ENCODE measurements at regions of chr4 and their contacts with region 1.

Region 1: DNA sequence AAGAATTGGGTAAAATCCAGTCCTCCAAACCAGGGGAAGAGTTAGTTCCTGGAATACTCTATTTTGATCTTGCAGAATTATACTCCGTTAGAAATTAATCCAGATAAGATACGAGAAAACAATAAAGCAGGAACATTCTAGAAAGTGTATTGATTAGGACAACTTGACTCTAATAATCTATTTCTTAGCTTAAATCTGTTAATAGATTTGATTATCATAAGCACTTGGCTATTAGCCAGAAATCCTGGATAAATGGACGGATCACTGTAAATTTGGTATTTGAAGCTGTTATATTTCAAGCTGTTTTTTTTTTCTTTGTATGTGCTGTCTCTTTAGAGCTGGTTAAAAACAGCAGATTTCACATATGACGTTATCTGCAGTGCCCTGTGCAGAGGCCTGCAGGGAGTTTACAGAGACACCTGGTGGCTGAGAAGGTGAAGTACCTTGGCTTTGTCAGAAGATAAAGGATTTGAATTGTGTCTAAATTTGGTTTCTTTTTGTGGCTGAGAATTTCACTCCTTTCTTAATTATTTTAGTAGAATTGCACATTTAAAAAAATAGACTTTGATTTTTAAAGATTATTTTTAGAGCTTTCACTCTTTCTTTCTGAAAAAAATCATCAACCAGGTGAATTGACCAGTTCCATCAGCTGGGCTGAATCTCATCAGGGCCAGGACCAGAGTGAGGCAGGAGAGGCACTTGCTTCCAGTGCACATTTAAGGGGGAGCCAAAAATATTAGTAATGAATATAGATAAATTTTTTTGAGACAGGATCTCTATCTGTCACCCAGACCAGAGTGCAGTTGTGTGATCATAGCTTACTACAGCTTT is 9.7 kb upstream of the CHRNA9 start:
- DNase-seq: no peak
- H3K4me3 ChIP-seq: no peak overlapping the region
- H3K27ac ChIP-seq: no peak overlapping the region
- H3K4me1 ChIP-seq: peaks cover 0 to 5% (median 0%) of the 10 kb centered on the region in 4 experiments; a peak in 1 of 7 replicates
- H3K27me3 ChIP-seq: no peaks in the 10 kb centered on the region
- CTCF ChIP-seq: peak; percentile 54 to 81 (median 70)
- EP300 ChIP-seq: no peak
- POLR2A ChIP-seq: no peak
- RAD21 ChIP-seq: peak; percentile 82 to 84

Region 2: DNA sequence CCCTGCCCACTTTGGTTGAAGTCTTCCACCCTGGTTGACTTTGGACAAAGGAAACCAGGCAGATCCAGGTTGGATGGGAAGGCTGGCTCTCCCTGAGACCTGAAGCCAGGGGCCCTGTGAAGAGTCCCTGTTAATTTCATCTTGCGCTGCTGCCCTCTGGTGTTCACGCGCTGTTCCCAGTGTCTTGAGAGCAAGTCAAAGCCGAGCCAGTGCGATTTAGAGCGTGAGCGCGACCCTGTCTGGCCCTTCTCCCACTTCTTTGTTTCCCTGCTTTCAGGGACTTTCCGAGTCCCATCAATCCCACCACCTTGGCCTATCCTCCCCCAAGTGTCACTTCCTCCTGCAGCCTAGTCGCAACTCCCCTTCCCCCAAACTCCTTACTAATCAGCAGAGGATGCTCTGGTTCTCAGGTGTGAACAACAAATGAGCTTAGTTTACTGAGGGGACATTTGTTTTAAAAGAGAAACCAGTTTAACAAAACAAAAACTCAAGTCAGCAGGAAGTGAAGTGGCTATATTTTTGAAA is 16.1 kb before region 1 on chr4:
- CTCF ChIA-PET with region 1: interaction called, 39 read pairs
- POLR2A ChIA-PET with region 1: interaction called, 8 read pairs
- DNase-seq: peak; percentile 92 to 95
- H3K4me3 ChIP-seq: peak overlapping the region in 1 of 4 experiments; percentile 16; a peak in 1 of 8 replicates
- H3K27ac ChIP-seq: peak overlapping the region; percentile 2; the same call in 1 of the 2 replicates
- H3K4me1 ChIP-seq: peaks cover 6 to 25% (median 16%) of the 10 kb centered on the region in 4 experiments; a peak in 6 of 7 replicates
- H3K27me3 ChIP-seq: peaks cover 0 to 1% (median 0%) of the 10 kb centered on the region in 4 experiments; a peak in 1 of 7 replicates
- CTCF ChIP-seq: peak; percentile 85 to 96 (median 87)
- EP300 ChIP-seq: peak in 1 of 2 experiments; percentile 81; a peak in 1 of 3 replicates
- POLR2A ChIP-seq: peak in 1 of 2 experiments; percentile 39; a peak in 1 of 3 replicates
- RAD21 ChIP-seq: peak; percentile 86 to 88

Region 3: GRCh38 chr4:40340030-40340429 is 14.6 kb after region 1 on chr4:
- CTCF ChIA-PET with region 1: interaction called, 14 read pairs
- POLR2A ChIA-PET with region 1: interaction called, 4 read pairs
- DNase-seq: no peak
- H3K4me3 ChIP-seq: no peak overlapping the region
- H3K27ac ChIP-seq: no peak overlapping the region
- H3K4me1 ChIP-seq: peaks cover 0 to 5% (median 1%) of the 10 kb centered on the region in 4 experiments; a peak in 3 of 7 replicates
- H3K27me3 ChIP-seq: no peaks in the 10 kb centered on the region
- CTCF ChIP-seq: no peak
- EP300 ChIP-seq: no peak
- POLR2A ChIP-seq: no peak
- RAD21 ChIP-seq: no peak

Measured in H1 (cell line).